Activated naive CD4-positive, alpha-beta T cell treated with anti-CD3 and anti-CD28 coated beads, Interleukin-2, amount 10 ng/mL, durations not matched to agents 7 days and 5 days (primary cell): ENCODE measurements at regions of chr3 and their contacts with region 1.

Region 1: GRCh38 chr3:169764452-169765274 is at the start of gene TERC:
- DNase-seq: peak; percentile 94
- H3K4me3 Mint-ChIP-seq: peak within 1 kb of the TSS; percentile 95
- H3K27ac Mint-ChIP-seq: peak within 1 kb of the TSS; percentile 98
- H3K4me1 Mint-ChIP-seq: peaks cover 39% of the 10 kb centered on the region
- H3K27me3 Mint-ChIP-seq: peaks cover 10% of the 10 kb centered on the region

Region 2: GRCh38 chr3:169863458-169863899 is 98.8 kb after region 1 on chr3:
- CTCF ChIA-PET with region 1: interaction called, 12 read pairs
- DNase-seq: peak; percentile 76
- H3K4me3 Mint-ChIP-seq: no peak overlapping the region
- H3K27ac Mint-ChIP-seq: no peak overlapping the region
- H3K4me1 Mint-ChIP-seq: peaks cover 33% of the 10 kb centered on the region
- H3K27me3 Mint-ChIP-seq: peaks cover 8% of the 10 kb centered on the region